Sigmoid colon (tissue), 7 donors: ENCODE measurements at regions of chr7 and their contacts with region 1.

Region 1: GRCh38 chr7:96709381-96710228 is at the start of gene SEM1:
- DNase-seq: peak; percentile 90
- H3K4me3 ChIP-seq: peak within 1 kb of the TSS; percentile 66 to 91 (median 79)
- H3K27ac ChIP-seq: peak within 1 kb of the TSS; percentile 82 to 91 (median 86)
- H3K4me1 ChIP-seq: peaks cover 0 to 22% (median 19%) of the 10 kb centered on the region in 4 donors
- H3K27me3 ChIP-seq: no peaks in the 10 kb centered on the region
- CTCF ChIP-seq: no peak
- EP300 ChIP-seq: peak in 1 of 4 donors; percentile 48
- POLR2A ChIP-seq: peak in 1 of 2 donors; percentile 27
- total RNA-seq, gene SEM1: 16.3 to 37.0 (median 25.9) TPM

Region 2: GRCh38 chr7:96311967-96312366 is 397.6 kb before region 1 on chr7:
- intact Hi-C with region 1: loop called (anchors 10 kb)
- DNase-seq: peak; percentile 84
- H3K4me3 ChIP-seq: no peak overlapping the region
- H3K27ac ChIP-seq: peak overlapping the region in 2 of 4 donors; percentile 28 to 40
- H3K4me1 ChIP-seq: peaks cover 0 to 48% (median 39%) of the 10 kb centered on the region in 4 donors
- H3K27me3 ChIP-seq: no peaks in the 10 kb centered on the region
- CTCF ChIP-seq: no peak
- EP300 ChIP-seq: no peak
- POLR2A ChIP-seq: no peak